HepG2 (cell line): ENCODE measurements at regions of chr13 and their contacts with region 1.

Region 1: DNA sequence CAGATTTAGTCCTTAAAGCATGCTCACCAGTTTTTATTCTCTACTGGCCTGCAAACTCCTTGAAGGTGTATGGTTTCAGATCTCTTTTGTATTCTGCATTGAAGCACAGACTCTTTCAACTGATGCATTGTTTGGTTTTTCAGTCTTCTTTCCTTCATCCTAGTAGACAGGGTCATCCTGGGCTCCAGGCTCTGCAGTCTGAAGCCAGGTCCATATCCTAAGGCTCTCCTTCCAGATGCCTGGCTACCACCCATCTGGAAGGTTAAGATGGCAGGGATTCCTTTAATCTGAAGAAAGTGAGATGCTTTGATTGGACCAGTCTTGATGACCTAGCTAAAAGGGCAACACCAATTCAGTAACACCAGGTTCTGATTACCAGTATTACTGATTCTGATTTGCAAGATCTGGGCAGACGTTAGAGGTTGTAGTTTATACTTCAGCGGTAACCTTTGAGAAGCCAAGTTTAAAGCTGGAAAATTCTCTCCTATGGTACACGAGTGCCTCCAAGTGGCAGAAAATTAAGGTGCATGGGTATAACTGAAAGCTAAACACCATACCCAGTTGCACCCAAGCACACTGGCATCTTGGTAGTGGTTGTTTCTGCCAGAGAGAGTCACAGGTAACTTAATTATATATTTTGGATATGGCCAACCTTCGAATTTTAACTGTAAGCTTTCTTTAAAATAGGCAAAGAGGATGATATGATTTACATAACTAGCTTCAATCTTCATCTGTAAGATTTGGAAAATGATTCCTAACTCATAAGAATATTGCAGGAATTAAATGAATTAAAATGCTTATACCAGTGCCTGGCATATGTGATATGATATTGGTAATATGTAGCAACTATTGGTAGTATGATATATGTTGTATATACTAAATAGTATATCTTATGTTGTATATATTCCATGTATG is 1651.9 kb upstream of the MIR17HG start:
- DNase-seq: peak; percentile 9
- ATAC-seq: peak; percentile 77
- H3K4me3 ChIP-seq: no peak overlapping the region
- H3K27ac ChIP-seq: no peak overlapping the region
- H3K4me1 ChIP-seq: no peaks in the 10 kb centered on the region
- H3K27me3 ChIP-seq: no peaks in the 10 kb centered on the region
- CTCF ChIP-seq: peak; percentile 70
- EP300 ChIP-seq: no peak
- POLR2A ChIP-seq: no peak
- RAD21 ChIP-seq: no peak

Region 2: GRCh38 chr13:89361909-89362308 is 333.7 kb before region 1 on chr13:
- CTCF ChIA-PET with region 1: no interaction called
- POLR2A ChIA-PET with region 1: no interaction called
- in situ Hi-C with region 1: no loop called
- intact Hi-C with region 1: loop called (anchors 10 kb)
- DNase-seq: no peak
- ATAC-seq: no peak
- H3K4me3 ChIP-seq: no peak overlapping the region
- H3K27ac ChIP-seq: no peak overlapping the region
- H3K4me1 ChIP-seq: no peaks in the 10 kb centered on the region
- H3K27me3 ChIP-seq: no peaks in the 10 kb centered on the region; a peak in 1 of 5 replicates
- CTCF ChIP-seq: no peak
- EP300 ChIP-seq: no peak
- POLR2A ChIP-seq: no peak
- RAD21 ChIP-seq: no peak

Region 3: DNA sequence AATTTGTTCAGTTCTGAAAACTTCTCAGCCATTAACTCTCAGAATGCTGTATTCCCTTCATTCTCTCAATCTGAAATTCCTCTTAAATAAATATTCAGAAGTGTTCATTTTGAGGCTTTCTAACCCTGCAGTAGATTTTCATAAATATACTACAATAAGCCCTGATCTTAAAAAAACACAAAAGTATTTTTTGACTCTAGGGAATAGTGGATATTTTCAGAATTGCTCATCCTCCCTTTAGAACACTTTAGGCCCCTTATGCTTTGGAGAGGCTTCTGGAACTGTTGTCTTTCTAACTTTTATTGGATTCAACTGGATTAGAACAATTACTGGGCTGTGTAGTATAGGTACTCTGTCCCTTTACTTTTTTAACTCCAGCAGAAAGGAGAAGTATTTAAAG is 10.7 kb before region 1 on chr13:
- CTCF ChIA-PET with region 1: no interaction called
- POLR2A ChIA-PET with region 1: no interaction called
- in situ Hi-C with region 1: no loop called
- intact Hi-C with region 1: no loop called
- DNase-seq: no peak
- ATAC-seq: no peak
- H3K4me3 ChIP-seq: no peak overlapping the region
- H3K27ac ChIP-seq: no peak overlapping the region
- H3K4me1 ChIP-seq: no peaks in the 10 kb centered on the region
- H3K27me3 ChIP-seq: no peaks in the 10 kb centered on the region; a peak in 1 of 5 replicates
- CTCF ChIP-seq: no peak
- EP300 ChIP-seq: no peak
- POLR2A ChIP-seq: no peak
- RAD21 ChIP-seq: no peak

Region 4: DNA sequence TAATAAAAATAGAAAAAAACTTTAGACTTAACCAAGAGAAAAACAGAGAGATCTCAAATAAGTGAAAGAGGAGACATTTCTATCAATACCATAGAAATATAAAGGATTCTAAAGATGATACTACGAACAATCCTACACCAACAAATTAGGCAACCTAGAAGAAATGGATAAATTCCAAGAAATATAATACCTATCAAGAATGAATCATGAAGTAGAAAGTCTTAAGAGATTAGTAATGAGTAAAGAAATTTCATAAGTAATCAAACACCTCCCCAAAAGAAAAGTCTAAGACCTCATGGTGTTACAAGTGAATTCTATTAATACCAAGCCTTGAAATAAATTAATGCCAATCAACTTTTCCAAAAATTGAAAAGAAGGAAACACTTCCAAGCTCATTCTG is 67.4 kb after region 1 on chr13:
- CTCF ChIA-PET with region 1: no interaction called
- POLR2A ChIA-PET with region 1: no interaction called
- in situ Hi-C with region 1: no loop called
- intact Hi-C with region 1: no loop called
- DNase-seq: no peak
- ATAC-seq: no peak
- H3K4me3 ChIP-seq: no peak overlapping the region
- H3K27ac ChIP-seq: no peak overlapping the region
- H3K4me1 ChIP-seq: no peaks in the 10 kb centered on the region
- H3K27me3 ChIP-seq: no peaks in the 10 kb centered on the region
- CTCF ChIP-seq: no peak
- EP300 ChIP-seq: no peak
- POLR2A ChIP-seq: no peak
- RAD21 ChIP-seq: no peak